CD8-positive, alpha-beta memory T cell (primary cell): ENCODE measurements at regions of chr11 and their contacts with region 1.

Region 1: DNA sequence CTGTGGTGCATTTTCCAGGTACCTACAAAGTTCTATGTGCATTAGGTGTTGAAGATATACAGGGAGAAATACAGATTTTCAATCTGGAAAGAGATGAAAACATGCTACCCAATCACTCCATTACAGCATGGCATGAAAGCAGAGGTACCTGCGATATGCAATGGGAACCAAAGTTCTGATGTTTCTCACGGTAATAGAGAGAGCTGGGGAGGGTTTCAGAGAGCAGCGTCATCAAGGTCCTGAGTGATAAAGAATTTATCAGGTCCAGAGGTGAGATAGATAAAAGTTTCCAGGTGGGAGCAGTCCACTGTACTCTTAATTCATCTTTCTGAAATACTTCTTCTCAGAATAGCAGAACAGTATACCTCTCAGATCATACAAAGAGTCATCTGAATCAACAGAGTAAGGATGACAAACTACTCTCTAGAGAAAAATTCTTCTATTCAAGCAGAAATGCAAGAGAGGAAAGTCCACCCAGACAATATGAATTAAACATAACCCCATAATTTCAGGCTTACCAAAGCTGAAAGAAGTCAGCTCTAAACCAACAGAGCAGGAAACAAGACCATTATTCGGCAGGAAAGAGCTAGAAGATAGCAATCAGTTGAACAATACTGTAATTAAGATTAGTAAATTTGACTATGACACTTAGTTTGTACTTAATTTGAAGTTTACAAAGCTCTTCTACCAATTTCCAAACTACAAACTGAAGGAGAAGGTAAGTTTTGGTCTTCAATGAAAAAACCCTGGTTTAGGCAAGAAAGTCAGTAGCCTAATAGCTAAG is 12.8 kb downstream of the CTSC start:
- DNase-seq: no peak
- H3K4me3 ChIP-seq: no peak overlapping the region
- H3K4me3 Mint-ChIP-seq: peak overlapping the region; percentile 23 to 74 (median 52)
- H3K27ac ChIP-seq: no peak overlapping the region
- H3K27ac Mint-ChIP-seq: peak overlapping the region in 7 of 8 donors; percentile 4 to 80 (median 64)
- H3K4me1 ChIP-seq: peaks cover 41% of the 10 kb centered on the region
- H3K4me1 Mint-ChIP-seq: peaks cover 93 to 100% (median 99%) of the 10 kb centered on the region in 3 donors
- H3K27me3 ChIP-seq: no peaks in the 10 kb centered on the region
- H3K27me3 Mint-ChIP-seq: no peaks in the 10 kb centered on the region

Region 2: DNA sequence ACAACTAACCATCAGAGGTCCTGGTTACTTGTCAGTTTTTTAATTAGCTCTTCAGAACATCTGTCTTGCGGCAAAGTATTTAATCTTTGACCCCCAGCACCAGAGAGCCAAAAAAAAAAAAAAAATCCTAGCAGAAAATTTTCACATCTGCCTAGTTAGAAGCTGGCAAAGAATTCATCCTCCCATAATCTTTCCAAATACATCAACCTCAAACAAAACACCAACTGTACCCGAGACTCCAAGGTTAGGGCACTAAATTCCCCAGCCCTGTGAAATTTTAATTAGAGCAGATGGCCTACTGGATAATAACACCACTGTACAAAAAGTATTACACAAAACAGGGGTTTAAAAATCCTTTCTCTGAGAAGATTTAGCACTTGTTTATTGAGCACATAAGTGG is 205.2 kb before region 1 on chr11:
- CTCF ChIA-PET with region 1: no interaction called
- POLR2A ChIA-PET with region 1: no interaction called
- DNase-seq: no peak
- H3K4me3 ChIP-seq: no peak overlapping the region
- H3K4me3 Mint-ChIP-seq: no peak overlapping the region
- H3K27ac ChIP-seq: no peak overlapping the region
- H3K27ac Mint-ChIP-seq: no peak overlapping the region
- H3K4me1 ChIP-seq: no peaks in the 10 kb centered on the region
- H3K4me1 Mint-ChIP-seq: no peaks in the 10 kb centered on the region
- H3K27me3 ChIP-seq: no peaks in the 10 kb centered on the region
- H3K27me3 Mint-ChIP-seq: no peaks in the 10 kb centered on the region

Region 3: DNA sequence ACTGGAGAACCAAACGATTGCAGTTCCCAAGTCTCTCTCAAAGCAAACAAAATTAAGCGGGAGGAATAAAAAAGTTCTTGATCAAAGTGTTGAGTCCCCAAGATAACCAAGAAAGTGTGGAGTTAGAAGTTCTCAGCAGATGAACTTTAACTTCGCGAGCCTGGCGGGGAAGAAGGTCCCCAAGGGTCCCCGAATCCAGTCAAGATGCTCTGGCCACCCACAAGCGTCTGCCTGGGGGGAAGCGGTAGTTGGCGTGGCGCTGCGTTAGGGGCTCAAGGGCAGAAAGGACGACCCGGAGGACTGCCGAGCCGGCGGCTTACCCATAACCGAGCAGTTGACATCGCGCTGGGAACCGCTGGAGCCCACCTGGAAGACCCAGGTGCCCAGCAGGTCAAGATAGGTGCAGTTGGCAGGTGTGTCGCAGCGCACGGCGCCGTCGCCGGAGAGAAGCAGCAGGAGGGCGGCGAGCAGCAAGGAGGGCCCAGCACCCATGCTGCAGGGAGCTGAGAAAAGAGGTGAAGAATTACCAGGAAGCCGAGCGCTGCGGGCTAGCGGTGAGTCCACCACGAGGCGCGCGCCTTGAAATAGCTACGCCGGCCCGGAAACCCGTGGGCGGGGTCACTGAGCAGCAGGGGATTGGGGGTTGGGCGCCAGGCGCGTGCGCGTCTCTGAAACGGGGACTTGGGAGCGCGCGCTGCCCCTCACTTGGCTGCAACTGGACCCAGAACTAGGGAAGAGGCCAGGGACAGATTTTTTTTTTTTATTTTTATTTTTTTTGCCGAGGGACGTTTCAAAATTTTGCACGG is 12.6 kb after region 1 on chr11 and contains the start of gene CTSC:
- CTCF ChIA-PET with region 1: interaction called, 12 read pairs
- POLR2A ChIA-PET with region 1: interaction called, 6 read pairs
- DNase-seq: peak; percentile 87 to 94 (median 88)
- H3K4me3 ChIP-seq: peak within 1 kb of the TSS; percentile 97
- H3K4me3 Mint-ChIP-seq: peak within 1 kb of the TSS; percentile 88 to 100 (median 93)
- H3K27ac ChIP-seq: peak within 1 kb of the TSS; percentile 88
- H3K27ac Mint-ChIP-seq: peak within 1 kb of the TSS; percentile 78 to 99 (median 95)
- H3K4me1 ChIP-seq: peaks cover 30% of the 10 kb centered on the region
- H3K4me1 Mint-ChIP-seq: peaks cover 56 to 77% (median 75%) of the 10 kb centered on the region in 3 donors
- H3K27me3 ChIP-seq: no peaks in the 10 kb centered on the region
- H3K27me3 Mint-ChIP-seq: peaks cover 0 to 2% of the 10 kb centered on the region in 2 donors
- total RNA-seq, gene CTSC: 128 to 132 TPM

Region 4: DNA sequence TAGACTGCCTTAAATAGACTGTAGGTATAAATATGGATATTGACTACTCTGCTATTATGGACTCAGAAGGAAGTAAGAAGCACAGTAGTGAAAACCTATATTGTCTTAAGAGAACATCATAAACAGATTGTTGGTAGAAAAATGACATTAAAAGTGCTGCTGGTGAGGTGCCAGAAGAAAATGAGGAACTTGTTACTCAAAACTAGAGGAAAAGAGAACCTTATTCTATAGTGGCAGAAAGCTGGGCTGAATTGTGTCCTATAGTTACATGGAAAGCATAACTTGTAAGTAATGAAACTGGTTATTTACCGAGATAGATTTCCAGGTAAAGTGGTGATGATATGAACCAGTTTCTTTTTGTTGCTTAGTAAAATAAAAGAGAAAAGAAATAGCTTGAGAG is 122.5 kb after region 1 on chr11:
- CTCF ChIA-PET with region 1: no interaction called
- POLR2A ChIA-PET with region 1: no interaction called
- DNase-seq: no peak
- H3K4me3 ChIP-seq: no peak overlapping the region
- H3K4me3 Mint-ChIP-seq: no peak overlapping the region
- H3K27ac ChIP-seq: no peak overlapping the region
- H3K27ac Mint-ChIP-seq: peak overlapping the region in 1 of 8 donors; percentile 13
- H3K4me1 ChIP-seq: no peaks in the 10 kb centered on the region
- H3K4me1 Mint-ChIP-seq: no peaks in the 10 kb centered on the region
- H3K27me3 ChIP-seq: no peaks in the 10 kb centered on the region
- H3K27me3 Mint-ChIP-seq: peaks cover 0 to 4% of the 10 kb centered on the region in 2 donors